Activated CD8-positive, alpha-beta T cell treated with anti-CD3 and anti-CD28 coated beads, Interleukin-2, amount 10 ng/mL, durations not matched to agents 7 days and 5 days (primary cell): ENCODE measurements at regions of chrX and their contacts with region 1.

Region 1: GRCh38 chrX:46758906-46759644 is at the start of gene SLC9A7:
- DNase-seq: peak; percentile 82
- ATAC-seq: peak; percentile 91
- H3K4me3 Mint-ChIP-seq: peak within 1 kb of the TSS; percentile 88
- H3K27ac Mint-ChIP-seq: peak within 1 kb of the TSS; percentile 85
- H3K4me1 Mint-ChIP-seq: peaks cover 28% of the 10 kb centered on the region
- H3K27me3 Mint-ChIP-seq: peaks cover 12% of the 10 kb centered on the region
- total RNA-seq, gene SLC9A7: 3.3 to 3.8 TPM

Region 2: GRCh38 chrX:46298821-46299220 is 460.3 kb before region 1 on chrX:
- CTCF ChIA-PET with region 1: no interaction called
- POLR2A ChIA-PET with region 1: no interaction called
- DNase-seq: no peak
- ATAC-seq: no peak
- H3K4me3 Mint-ChIP-seq: no peak overlapping the region
- H3K27ac Mint-ChIP-seq: no peak overlapping the region
- H3K4me1 Mint-ChIP-seq: no peaks in the 10 kb centered on the region
- H3K27me3 Mint-ChIP-seq: no peaks in the 10 kb centered on the region

Region 3: DNA sequence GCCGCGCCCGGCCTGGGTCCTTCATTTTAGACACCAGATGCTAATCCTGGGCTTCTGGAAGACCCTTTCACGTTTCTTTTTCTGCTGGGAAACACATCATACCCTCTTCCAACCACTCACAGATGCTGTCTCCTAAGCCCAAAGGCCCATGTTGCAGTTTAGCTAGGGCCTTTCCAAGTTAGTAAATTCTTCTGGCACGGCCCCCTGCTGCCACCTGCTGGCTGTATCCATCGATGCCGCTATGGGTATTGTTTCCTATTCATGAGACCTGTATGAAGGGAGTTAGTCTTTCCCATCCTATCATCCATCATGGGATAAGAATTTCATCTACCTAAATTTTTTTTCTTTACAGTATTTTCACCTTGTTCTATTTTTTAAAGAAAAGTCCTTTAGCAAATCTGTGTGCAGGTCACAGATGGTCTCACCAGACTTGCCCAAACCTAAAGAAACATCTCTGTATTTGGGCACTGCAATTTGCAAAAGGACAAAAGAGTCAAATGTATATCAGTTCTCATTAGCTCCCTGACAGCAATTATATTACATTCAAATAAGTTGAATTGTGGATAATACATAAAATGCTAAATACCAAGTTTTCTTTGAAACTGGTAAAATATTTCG is 37.6 kb after region 1 on chrX:
- CTCF ChIA-PET with region 1: interaction called, 20 read pairs
- POLR2A ChIA-PET with region 1: no interaction called
- DNase-seq: peak; percentile 78
- ATAC-seq: peak; percentile 69
- H3K4me3 Mint-ChIP-seq: no peak overlapping the region
- H3K27ac Mint-ChIP-seq: no peak overlapping the region
- H3K4me1 Mint-ChIP-seq: peaks cover 19% of the 10 kb centered on the region
- H3K27me3 Mint-ChIP-seq: peaks cover 3% of the 10 kb centered on the region

Region 4: GRCh38 chrX:46912098-46912602 is 153.1 kb after region 1 on chrX and contains the start of gene JADE3:
- CTCF ChIA-PET with region 1: no interaction called
- POLR2A ChIA-PET with region 1: no interaction called
- DNase-seq: peak; percentile 24
- ATAC-seq: peak; percentile 71
- H3K4me3 Mint-ChIP-seq: peak within 1 kb of the TSS; percentile 70
- H3K27ac Mint-ChIP-seq: no peak within 1 kb of the TSS
- H3K4me1 Mint-ChIP-seq: peaks cover 6% of the 10 kb centered on the region
- H3K27me3 Mint-ChIP-seq: peaks cover 42% of the 10 kb centered on the region
- total RNA-seq, gene JADE3: 0.31 to 0.47 TPM